AG04450 (cell line): ENCODE measurements at regions of chr3 and their contacts with region 1.

Region 1: DNA sequence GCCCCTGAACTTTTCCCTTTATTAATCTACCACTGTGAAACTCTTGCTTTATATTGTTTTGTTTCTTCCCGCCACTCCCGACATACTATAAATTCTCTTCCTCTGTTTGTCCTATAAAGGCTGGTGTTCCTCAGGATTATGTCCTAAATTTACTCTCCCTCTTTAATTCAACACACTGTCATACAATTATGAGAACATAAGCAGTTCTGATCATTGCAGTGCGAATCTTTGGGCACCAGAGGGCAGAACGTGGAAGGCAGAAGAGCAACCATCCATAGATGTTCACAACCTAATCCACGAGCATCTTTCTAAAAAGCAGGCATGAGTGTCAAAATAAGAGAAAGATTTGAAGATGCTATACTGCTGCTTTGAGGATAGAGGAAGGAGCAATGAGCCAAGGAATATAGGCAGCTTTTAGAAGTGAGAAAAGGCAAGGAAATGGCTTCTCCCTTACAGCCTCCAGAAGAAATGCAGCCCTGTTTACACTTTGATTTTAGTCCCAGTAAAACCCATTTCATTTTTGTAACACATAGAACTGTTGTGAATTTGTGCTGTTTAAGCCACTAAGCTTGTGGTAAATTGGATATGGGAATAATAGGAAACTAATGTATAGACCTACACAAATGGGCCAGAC is 179.4 kb downstream of the GBE1 start:
- DNase-seq: peak; percentile 13
- H3K4me3 ChIP-seq: no peak overlapping the region
- H3K27ac ChIP-seq: no peak overlapping the region
- H3K27me3 ChIP-seq: no peaks in the 10 kb centered on the region
- CTCF ChIP-seq: peak; percentile 86

Region 2: GRCh38 chr3:81363816-81364215 is 218.3 kb before region 1 on chr3:
- CTCF ChIA-PET with region 1: no interaction called
- POLR2A ChIA-PET with region 1: no interaction called
- DNase-seq: no peak
- H3K4me3 ChIP-seq: no peak overlapping the region
- H3K27ac ChIP-seq: no peak overlapping the region
- H3K27me3 ChIP-seq: no peaks in the 10 kb centered on the region
- CTCF ChIP-seq: no peak

Region 3: DNA sequence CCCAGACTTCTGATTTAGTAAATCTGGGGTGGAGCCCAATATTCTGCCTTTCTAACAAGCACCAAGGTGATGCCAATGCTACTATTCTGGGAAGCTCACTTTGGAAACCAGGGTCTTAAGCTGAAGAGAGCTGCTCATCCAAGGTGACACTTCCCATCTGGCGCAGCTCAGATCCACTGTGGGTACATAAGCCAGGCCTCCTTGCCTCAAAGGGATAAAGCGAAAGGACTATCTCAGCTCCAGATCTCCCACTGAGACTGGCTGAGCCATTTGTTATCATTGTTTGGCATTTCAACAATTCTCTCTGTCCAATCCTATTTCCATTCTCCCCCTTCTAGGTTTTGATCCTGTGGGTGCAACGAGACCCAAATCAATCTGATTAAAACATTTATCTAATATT is 144.4 kb before region 1 on chr3:
- CTCF ChIA-PET with region 1: no interaction called
- POLR2A ChIA-PET with region 1: no interaction called
- DNase-seq: no peak
- H3K4me3 ChIP-seq: no peak overlapping the region
- H3K27ac ChIP-seq: no peak overlapping the region
- H3K27me3 ChIP-seq: no peaks in the 10 kb centered on the region
- CTCF ChIP-seq: no peak

Region 4: DNA sequence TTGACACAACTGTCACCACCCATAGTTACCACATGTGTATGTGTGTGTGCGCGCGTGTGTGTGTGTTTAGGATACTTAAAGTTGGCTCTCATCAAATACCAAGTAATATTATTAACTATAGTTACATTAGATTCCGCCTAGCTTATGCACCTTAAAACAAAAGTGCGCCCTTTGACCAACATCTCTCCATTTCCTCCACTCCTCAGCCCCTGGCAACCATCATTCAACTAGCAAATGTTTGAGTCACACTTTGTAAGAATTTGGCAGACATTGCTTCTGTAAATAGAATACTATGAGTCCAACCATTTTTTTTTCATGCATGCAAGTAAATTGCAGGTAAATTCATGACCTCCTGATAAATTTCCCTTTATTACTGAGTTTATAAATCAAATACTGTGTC is 10.0 kb after region 1 on chr3:
- CTCF ChIA-PET with region 1: interaction called, 18 read pairs
- POLR2A ChIA-PET with region 1: no interaction called
- DNase-seq: peak; percentile 8
- H3K4me3 ChIP-seq: no peak overlapping the region
- H3K27ac ChIP-seq: no peak overlapping the region
- H3K27me3 ChIP-seq: no peaks in the 10 kb centered on the region
- CTCF ChIP-seq: no peak

Region 5: GRCh38 chr3:81643721-81644120 is 61.6 kb after region 1 on chr3:
- CTCF ChIA-PET with region 1: interaction called, 52 read pairs
- POLR2A ChIA-PET with region 1: no interaction called
- DNase-seq: no peak
- H3K4me3 ChIP-seq: no peak overlapping the region
- H3K27ac ChIP-seq: no peak overlapping the region
- H3K27me3 ChIP-seq: no peaks in the 10 kb centered on the region
- CTCF ChIP-seq: peak; percentile 47

Region 6: GRCh38 chr3:81692766-81693165 is 110.7 kb after region 1 on chr3:
- CTCF ChIA-PET with region 1: no interaction called
- POLR2A ChIA-PET with region 1: no interaction called
- DNase-seq: no peak
- H3K4me3 ChIP-seq: no peak overlapping the region
- H3K27ac ChIP-seq: no peak overlapping the region
- H3K27me3 ChIP-seq: no peaks in the 10 kb centered on the region
- CTCF ChIP-seq: no peak

Region 7: GRCh38 chr3:82186017-82186416 is 603.9 kb after region 1 on chr3:
- CTCF ChIA-PET with region 1: no interaction called
- POLR2A ChIA-PET with region 1: no interaction called
- DNase-seq: no peak
- H3K4me3 ChIP-seq: no peak overlapping the region
- H3K27ac ChIP-seq: no peak overlapping the region
- H3K27me3 ChIP-seq: no peaks in the 10 kb centered on the region
- CTCF ChIP-seq: no peak